ENCODE measurements at regions of chr4 and their contacts with region 1.

Region 1: GRCh38 chr4:146110871-146111485 is 64.5 kb upstream of the LSM6 start:
- DNase-seq: peak; percentile 52
- ATAC-seq: peak; percentile 53
- H3K4me3 ChIP-seq: no peak overlapping the region
- H3K4me3 Mint-ChIP-seq: peak overlapping the region; percentile 18
- H3K27ac ChIP-seq: no peak overlapping the region
- H3K27ac Mint-ChIP-seq: no peak overlapping the region
- H3K4me1 ChIP-seq: peaks cover 31 to 32% of the 10 kb centered on the region in 2 donors
- H3K4me1 Mint-ChIP-seq: peaks cover 36% of the 10 kb centered on the region
- H3K27me3 ChIP-seq: peaks cover 0 to 3% (median 0%) of the 10 kb centered on the region in 4 experiments
- H3K27me3 Mint-ChIP-seq: no peaks in the 10 kb centered on the region
- CTCF ChIP-seq: no peak

Region 2: DNA sequence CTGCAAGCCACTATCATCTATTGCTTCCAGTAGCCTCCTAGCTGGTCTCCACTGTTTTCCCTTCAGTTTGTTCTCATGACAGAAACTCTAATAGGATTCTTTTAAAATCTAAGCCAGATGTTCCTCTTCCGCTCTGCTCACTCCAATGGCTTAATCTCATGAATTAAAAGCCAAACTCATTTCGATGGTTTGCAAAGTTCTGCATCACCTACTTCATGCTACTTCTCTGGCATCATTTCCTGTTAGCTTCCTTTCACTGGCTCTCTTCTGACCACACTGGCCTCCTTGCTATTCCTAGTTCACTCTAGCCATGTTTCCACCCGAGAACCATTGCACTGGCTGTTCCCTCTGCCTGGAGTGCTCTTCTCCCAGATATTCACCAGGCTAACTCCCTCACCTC is 37.5 kb before region 1 on chr4:
- CTCF ChIA-PET with region 1: no interaction called
- POLR2A ChIA-PET with region 1: no interaction called
- intact Hi-C with region 1: loop called (anchors 5 kb)
- DNase-seq: peak; percentile 32
- ATAC-seq: no peak
- H3K4me3 ChIP-seq: no peak overlapping the region
- H3K4me3 Mint-ChIP-seq: no peak overlapping the region
- H3K27ac ChIP-seq: no peak overlapping the region
- H3K27ac Mint-ChIP-seq: no peak overlapping the region
- H3K4me1 ChIP-seq: peaks cover 10% of the 10 kb centered on the region in 2 donors
- H3K4me1 Mint-ChIP-seq: no peaks in the 10 kb centered on the region
- H3K27me3 ChIP-seq: no peaks in the 10 kb centered on the region
- H3K27me3 Mint-ChIP-seq: no peaks in the 10 kb centered on the region
- CTCF ChIP-seq: no peak

Region 3: GRCh38 chr4:146142783-146143182 is 31.8 kb after region 1 on chr4:
- CTCF ChIA-PET with region 1: no interaction called
- POLR2A ChIA-PET with region 1: no interaction called
- intact Hi-C with region 1: no loop called
- DNase-seq: no peak
- ATAC-seq: no peak
- H3K4me3 ChIP-seq: no peak overlapping the region
- H3K4me3 Mint-ChIP-seq: no peak overlapping the region
- H3K27ac ChIP-seq: no peak overlapping the region
- H3K27ac Mint-ChIP-seq: no peak overlapping the region
- H3K4me1 ChIP-seq: no peaks in the 10 kb centered on the region
- H3K4me1 Mint-ChIP-seq: no peaks in the 10 kb centered on the region
- H3K27me3 ChIP-seq: no peaks in the 10 kb centered on the region
- H3K27me3 Mint-ChIP-seq: no peaks in the 10 kb centered on the region
- CTCF ChIP-seq: no peak

Measured in B cell (primary cell).